Natural killer cell (primary cell): ENCODE measurements at regions of chr1 and their contacts with region 1.

Region 1: GRCh38 chr1:153510984-153511410 is 24.8 kb downstream of the S100A6 start:
- DNase-seq: peak; percentile 72 to 88
- ATAC-seq: peak; percentile 87 to 98 (median 97)
- H3K4me3 ChIP-seq: no peak overlapping the region
- H3K4me3 Mint-ChIP-seq: no peak overlapping the region
- H3K27ac ChIP-seq: no peak overlapping the region
- H3K27ac Mint-ChIP-seq: no peak overlapping the region
- H3K4me1 ChIP-seq: peaks cover 7% of the 10 kb centered on the region
- H3K4me1 Mint-ChIP-seq: peaks cover 0 to 6% of the 10 kb centered on the region in 2 donors
- H3K27me3 ChIP-seq: no peaks in the 10 kb centered on the region
- H3K27me3 Mint-ChIP-seq: no peaks in the 10 kb centered on the region
- CTCF ChIP-seq: peak; percentile 97

Region 2: GRCh38 chr1:153253693-153254092 is 257.3 kb before region 1 on chr1:
- intact Hi-C with region 1: no loop called
- DNase-seq: no peak
- ATAC-seq: no peak
- H3K4me3 ChIP-seq: no peak overlapping the region
- H3K4me3 Mint-ChIP-seq: no peak overlapping the region
- H3K27ac ChIP-seq: no peak overlapping the region
- H3K27ac Mint-ChIP-seq: no peak overlapping the region
- H3K4me1 ChIP-seq: no peaks in the 10 kb centered on the region
- H3K4me1 Mint-ChIP-seq: no peaks in the 10 kb centered on the region
- H3K27me3 ChIP-seq: no peaks in the 10 kb centered on the region
- H3K27me3 Mint-ChIP-seq: peaks cover 14 to 15% of the 10 kb centered on the region in 2 donors
- CTCF ChIP-seq: no peak

Region 3: DNA sequence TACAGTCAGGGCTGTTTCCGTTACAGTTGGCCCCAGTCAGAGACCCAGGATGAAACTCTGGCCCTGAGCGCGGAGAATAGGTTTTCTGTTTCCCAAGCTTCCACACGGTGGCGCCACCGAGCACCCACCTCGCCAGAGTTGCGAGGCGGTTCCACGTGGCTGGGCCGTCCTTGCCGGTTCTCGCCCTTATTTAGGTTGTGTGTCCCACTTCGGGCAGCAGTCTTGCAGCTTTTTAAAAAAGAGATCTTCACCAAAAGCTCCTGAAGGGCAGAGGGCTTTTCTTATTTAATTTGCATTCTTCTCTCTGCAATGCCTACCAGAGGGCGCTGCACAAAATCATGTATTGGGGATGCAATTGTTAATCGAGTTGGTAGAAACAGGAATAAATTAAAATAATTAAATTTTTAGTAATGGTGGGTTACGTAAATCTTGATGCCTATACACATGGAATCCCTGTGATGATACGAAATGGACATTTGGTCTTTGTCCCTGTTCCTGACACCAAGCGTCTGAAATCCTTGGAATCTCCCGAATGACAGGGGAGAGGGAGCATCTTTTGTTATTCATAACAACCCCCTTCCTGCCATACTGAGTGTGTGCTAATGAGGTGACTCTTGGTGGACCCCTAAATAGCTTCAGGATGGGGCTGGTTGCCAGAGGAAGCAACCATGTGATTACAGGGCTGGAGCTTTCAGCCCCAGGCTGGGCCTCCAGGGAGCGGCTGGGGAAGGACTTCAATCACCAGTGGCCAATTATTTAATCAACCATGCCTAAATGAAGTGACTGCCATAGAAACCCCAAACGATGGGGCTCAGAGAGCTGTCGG is 45.0 kb before region 1 on chr1:
- intact Hi-C with region 1: no loop called
- DNase-seq: peak; percentile 59 to 72
- ATAC-seq: peak; percentile 64 to 87 (median 80)
- H3K4me3 ChIP-seq: no peak overlapping the region
- H3K4me3 Mint-ChIP-seq: no peak overlapping the region
- H3K27ac ChIP-seq: no peak overlapping the region
- H3K27ac Mint-ChIP-seq: no peak overlapping the region
- H3K4me1 ChIP-seq: peaks cover 2% of the 10 kb centered on the region
- H3K4me1 Mint-ChIP-seq: peaks cover 5 to 6% of the 10 kb centered on the region in 2 donors
- H3K27me3 ChIP-seq: peaks cover 2% of the 10 kb centered on the region
- H3K27me3 Mint-ChIP-seq: peaks cover 10 to 13% of the 10 kb centered on the region in 2 donors
- CTCF ChIP-seq: peak; percentile 79

Region 4: DNA sequence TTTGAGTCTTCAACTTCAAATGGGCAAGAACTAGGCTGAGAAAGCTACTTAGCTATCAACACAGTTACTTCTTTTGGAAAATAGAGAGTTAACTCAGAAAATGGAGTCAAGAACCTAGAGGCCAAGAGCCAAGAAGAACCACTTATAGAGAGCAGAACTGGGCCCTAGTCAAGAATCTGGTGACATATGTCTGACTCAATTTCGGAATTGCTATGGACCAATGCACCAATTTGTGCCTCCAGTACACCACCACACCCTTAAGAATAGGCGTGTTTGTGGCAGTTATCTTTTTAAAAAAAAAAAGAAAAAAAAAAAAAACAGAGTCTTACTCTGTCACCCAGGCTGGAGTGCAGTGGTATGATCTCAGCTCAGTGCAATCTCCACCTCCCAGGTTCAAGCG is 46.9 kb after region 1 on chr1:
- intact Hi-C with region 1: no loop called
- DNase-seq: no peak
- ATAC-seq: no peak
- H3K4me3 ChIP-seq: no peak overlapping the region
- H3K4me3 Mint-ChIP-seq: no peak overlapping the region
- H3K27ac ChIP-seq: no peak overlapping the region
- H3K27ac Mint-ChIP-seq: no peak overlapping the region
- H3K4me1 ChIP-seq: no peaks in the 10 kb centered on the region
- H3K4me1 Mint-ChIP-seq: no peaks in the 10 kb centered on the region
- H3K27me3 ChIP-seq: no peaks in the 10 kb centered on the region
- H3K27me3 Mint-ChIP-seq: no peaks in the 10 kb centered on the region
- CTCF ChIP-seq: no peak

Region 5: GRCh38 chr1:153568367-153569099 is 57.5 kb after region 1 on chr1:
- intact Hi-C with region 1: loop called (anchors 1 kb)
- DNase-seq: peak; percentile 73 to 89
- ATAC-seq: peak; percentile 41 to 71 (median 71)
- H3K4me3 ChIP-seq: no peak overlapping the region
- H3K4me3 Mint-ChIP-seq: peak overlapping the region; percentile 60
- H3K27ac ChIP-seq: no peak overlapping the region
- H3K27ac Mint-ChIP-seq: peak overlapping the region; percentile 50 to 98
- H3K4me1 ChIP-seq: peaks cover 37% of the 10 kb centered on the region
- H3K4me1 Mint-ChIP-seq: peaks cover 25 to 34% of the 10 kb centered on the region in 2 donors
- H3K27me3 ChIP-seq: no peaks in the 10 kb centered on the region
- H3K27me3 Mint-ChIP-seq: peaks cover 0 to 12% of the 10 kb centered on the region in 2 donors
- CTCF ChIP-seq: peak; percentile 97

Region 6: DNA sequence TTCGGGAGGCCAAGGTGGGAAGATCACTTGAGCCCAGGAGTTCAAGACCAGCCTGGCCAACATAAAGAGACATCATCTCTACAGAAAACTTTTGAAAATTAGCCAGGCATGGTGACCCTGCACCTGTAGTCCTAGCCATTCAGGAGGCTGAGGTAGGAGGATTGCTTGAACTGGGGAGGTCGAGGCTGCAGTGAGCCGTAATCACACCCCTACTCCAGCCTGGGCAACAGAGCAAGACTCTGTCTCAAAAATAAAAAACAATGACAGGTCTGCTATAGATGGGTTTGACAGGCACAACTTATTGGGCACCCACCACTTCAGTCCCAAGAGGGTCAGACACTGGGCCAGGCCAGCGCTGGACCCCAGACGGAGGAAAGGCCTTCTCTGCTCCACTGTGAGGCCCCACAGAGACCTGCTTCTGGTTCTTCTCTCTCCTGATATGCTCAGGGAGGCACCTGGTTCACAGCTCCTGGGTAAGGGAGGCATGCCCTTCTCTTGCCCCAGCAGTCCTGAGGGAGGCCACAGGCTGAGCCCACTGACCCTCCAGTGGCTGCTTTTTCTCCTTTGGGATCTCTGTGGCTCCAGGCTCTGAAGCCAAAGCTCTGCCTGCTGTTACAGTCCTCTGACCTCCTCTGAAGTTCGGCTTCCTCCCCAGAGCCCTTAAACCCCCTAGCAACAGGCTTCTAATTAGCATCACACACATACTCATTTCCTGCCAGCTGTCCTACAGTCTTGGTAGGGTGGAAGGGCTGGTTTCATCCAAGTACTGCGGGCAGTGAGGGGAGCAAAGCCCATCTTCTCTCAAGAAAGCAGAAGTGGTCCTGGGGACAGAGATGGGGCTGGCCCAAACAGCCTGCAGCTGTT is 87.5 kb after region 1 on chr1:
- intact Hi-C with region 1: no loop called
- DNase-seq: peak in 1 of 2 donors; percentile 34
- ATAC-seq: peak in 2 of 3 donors; percentile 24 to 45
- H3K4me3 ChIP-seq: no peak overlapping the region
- H3K4me3 Mint-ChIP-seq: no peak overlapping the region
- H3K27ac ChIP-seq: peak overlapping the region; percentile 67
- H3K27ac Mint-ChIP-seq: no peak overlapping the region
- H3K4me1 ChIP-seq: peaks cover 14% of the 10 kb centered on the region
- H3K4me1 Mint-ChIP-seq: no peaks in the 10 kb centered on the region
- H3K27me3 ChIP-seq: no peaks in the 10 kb centered on the region
- H3K27me3 Mint-ChIP-seq: peaks cover 0 to 2% of the 10 kb centered on the region in 2 donors
- CTCF ChIP-seq: no peak

Region 7: GRCh38 chr1:153617675-153618074 is 106.7 kb after region 1 on chr1:
- intact Hi-C with region 1: loop called (anchors 1 kb)
- DNase-seq: peak; percentile 67 to 71
- ATAC-seq: peak; percentile 82 to 97 (median 96)
- H3K4me3 ChIP-seq: no peak overlapping the region
- H3K4me3 Mint-ChIP-seq: no peak overlapping the region
- H3K27ac ChIP-seq: no peak overlapping the region
- H3K27ac Mint-ChIP-seq: peak overlapping the region in 1 of 2 donors; percentile 53
- H3K4me1 ChIP-seq: peaks cover 8% of the 10 kb centered on the region
- H3K4me1 Mint-ChIP-seq: peaks cover 0 to 7% of the 10 kb centered on the region in 2 donors
- H3K27me3 ChIP-seq: no peaks in the 10 kb centered on the region
- H3K27me3 Mint-ChIP-seq: no peaks in the 10 kb centered on the region
- CTCF ChIP-seq: peak; percentile 62

Region 8: GRCh38 chr1:153749408-153750005 is 238.5 kb after region 1 on chr1:
- intact Hi-C with region 1: loop called (anchors 1 kb)
- DNase-seq: peak; percentile 66 to 86
- ATAC-seq: peak; percentile 100
- H3K4me3 ChIP-seq: no peak overlapping the region
- H3K4me3 Mint-ChIP-seq: no peak overlapping the region
- H3K27ac ChIP-seq: no peak overlapping the region
- H3K27ac Mint-ChIP-seq: peak overlapping the region in 1 of 2 donors; percentile 23
- H3K4me1 ChIP-seq: no peaks in the 10 kb centered on the region
- H3K4me1 Mint-ChIP-seq: peaks cover 6 to 7% of the 10 kb centered on the region in 2 donors
- H3K27me3 ChIP-seq: no peaks in the 10 kb centered on the region
- H3K27me3 Mint-ChIP-seq: no peaks in the 10 kb centered on the region
- CTCF ChIP-seq: peak; percentile 86